Lower leg skin (tissue), 4 donors: ENCODE measurements at regions of chr6 and their contacts with region 1.

Region 1: GRCh38 chr6:134029495-134030455 is 22.6 kb downstream of the SLC2A12 start:
- DNase-seq: no peak
- H3K4me3 ChIP-seq: no peak overlapping the region
- CTCF ChIP-seq: no peak
- POLR2A ChIP-seq: no peak

Region 2: DNA sequence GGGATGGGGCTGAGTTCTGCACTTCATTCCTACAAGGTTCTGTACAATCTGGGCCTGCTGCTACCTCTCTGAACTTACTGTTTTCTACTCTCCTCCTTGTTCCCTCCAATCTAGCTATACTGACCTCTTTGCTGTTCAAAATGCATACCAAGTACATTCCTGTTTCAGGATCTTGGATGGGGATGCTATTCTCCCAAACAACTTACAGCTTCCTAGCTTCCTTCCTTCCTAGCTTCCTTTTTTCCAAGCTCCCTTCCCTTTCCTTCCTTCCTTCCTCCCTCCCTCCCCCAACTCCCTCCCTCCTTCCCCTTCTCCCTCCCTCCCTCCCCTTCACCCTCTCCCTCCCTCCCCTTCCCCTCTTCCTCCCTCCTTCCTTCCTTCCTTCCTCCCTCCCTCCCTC is 1349.9 kb after region 1 on chr6:
- intact Hi-C with region 1: loop called (anchors 5 kb)
- DNase-seq: no peak
- H3K4me3 ChIP-seq: no peak overlapping the region
- CTCF ChIP-seq: no peak
- POLR2A ChIP-seq: no peak